PC-9 (cell line): ENCODE measurements at regions of chr1 and their contacts with region 1.

Region 1: DNA sequence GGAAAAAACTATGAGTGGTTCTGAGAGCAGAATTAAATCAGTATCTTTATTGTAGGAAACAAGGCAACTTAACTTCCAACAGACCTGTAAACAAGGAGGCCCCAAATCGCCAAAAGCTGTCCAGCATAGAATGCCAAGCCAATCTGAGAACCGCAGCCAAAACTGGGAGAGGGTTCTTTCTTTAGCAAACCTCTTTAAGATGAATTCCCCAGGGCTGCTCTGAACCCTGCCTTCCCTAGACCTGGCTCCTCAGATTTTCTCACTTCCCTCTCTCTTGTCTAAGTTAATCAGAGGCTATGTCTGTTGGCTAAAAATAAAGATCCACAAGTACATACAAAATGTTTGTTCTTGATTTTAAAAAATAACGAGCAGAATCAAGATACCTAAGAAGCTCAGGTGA is 141.4 kb downstream of the SMYD3 start:
- DNase-seq: no peak
- H3K4me3 ChIP-seq: no peak overlapping the region
- H3K27ac ChIP-seq: no peak overlapping the region
- H3K4me1 ChIP-seq: no peaks in the 10 kb centered on the region
- H3K27me3 ChIP-seq: no peaks in the 10 kb centered on the region
- CTCF ChIP-seq: no peak

Region 2: DNA sequence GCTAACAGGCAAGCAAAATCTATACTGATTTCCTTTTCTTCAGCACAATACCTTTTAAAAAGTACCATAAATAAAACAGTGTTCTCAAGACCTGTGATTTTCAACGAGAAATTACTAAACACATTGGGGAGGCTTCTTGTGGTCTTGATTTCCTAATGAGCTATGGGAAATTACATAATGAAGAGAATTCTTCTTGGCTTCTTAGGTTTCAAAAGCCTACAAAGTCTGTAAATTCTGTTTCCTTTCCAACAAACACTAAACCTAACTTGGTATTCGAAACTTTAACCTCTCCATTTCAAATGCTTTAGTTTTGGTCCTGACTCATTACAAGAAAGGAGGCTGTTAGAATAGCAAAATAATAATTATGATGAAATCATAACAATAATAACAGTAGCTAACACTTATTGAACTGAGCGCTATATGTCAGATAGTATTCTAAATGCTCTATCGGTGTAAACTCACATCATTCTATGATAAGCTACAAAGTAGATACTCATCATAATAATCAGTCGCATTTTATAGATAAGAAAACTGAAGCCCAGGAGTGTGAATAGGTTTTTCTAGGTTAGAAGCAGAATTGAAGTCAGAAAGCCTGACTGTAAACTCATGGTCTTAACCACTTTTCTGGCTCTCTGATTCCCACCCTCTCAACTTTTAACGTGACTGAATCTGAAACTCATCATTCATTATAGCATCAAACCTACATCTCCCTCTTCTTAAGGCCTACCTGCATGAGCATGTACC is 345.3 kb before region 1 on chr1:
- CTCF ChIA-PET with region 1: interaction called, 17 read pairs
- POLR2A ChIA-PET with region 1: no interaction called
- intact Hi-C with region 1: no loop called
- DNase-seq: no peak
- H3K4me3 ChIP-seq: no peak overlapping the region
- H3K27ac ChIP-seq: no peak overlapping the region
- H3K4me1 ChIP-seq: no peaks in the 10 kb centered on the region
- H3K27me3 ChIP-seq: no peaks in the 10 kb centered on the region
- CTCF ChIP-seq: no peak

Region 3: DNA sequence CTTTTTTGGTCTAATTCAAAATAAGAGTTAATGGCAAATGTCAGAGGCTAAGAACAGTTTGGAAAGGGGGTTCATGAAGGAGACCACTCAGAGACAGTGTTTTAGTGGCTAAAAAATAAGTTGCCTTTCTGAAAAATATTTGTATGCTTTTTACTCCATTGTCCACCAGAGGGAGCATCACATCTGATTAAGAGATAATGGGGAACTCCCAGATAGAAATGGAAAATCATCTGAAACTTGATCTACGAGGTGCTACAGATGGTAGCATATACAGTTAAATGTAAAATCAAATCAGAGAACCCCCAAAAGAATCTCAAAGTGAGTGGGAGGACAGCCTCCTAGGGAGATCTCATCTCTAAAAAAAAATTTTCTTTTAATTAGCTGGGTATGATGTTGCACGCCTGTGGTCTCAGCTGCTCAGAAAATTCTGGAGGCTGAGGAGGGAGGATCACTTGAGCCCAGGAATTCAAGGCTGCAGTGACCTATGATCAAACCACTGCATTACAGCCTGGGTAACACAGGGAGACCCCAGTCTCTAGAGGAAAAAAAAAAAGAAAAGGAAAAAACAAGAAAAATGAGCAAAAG is 131.7 kb after region 1 on chr1:
- CTCF ChIA-PET with region 1: no interaction called
- POLR2A ChIA-PET with region 1: no interaction called
- intact Hi-C with region 1: no loop called
- DNase-seq: peak in 1 of 2 experiments; percentile 53
- H3K4me3 ChIP-seq: no peak overlapping the region
- H3K27ac ChIP-seq: no peak overlapping the region
- H3K4me1 ChIP-seq: peaks cover 3% of the 10 kb centered on the region
- H3K27me3 ChIP-seq: no peaks in the 10 kb centered on the region
- CTCF ChIP-seq: peak; percentile 82

Region 4: DNA sequence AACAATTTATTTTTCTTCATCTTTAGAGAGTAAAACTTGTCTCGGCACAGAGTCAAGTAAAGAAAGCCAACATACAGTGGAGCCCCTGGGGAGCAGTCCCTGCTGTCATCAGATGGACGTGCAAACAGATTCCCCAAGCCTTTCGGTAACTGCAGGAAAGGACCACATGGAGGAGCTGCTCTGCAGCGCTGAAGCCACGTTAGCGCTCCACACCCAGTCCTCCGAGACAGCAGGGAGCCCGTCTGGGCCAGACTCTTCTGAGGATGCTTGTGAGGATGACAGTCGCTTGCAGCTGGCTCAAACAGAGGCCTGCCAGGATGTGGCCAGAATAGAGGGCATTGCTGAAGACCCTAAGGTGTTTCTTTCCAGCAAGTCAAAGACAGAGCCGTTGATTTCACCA is 281.4 kb after region 1 on chr1:
- CTCF ChIA-PET with region 1: no interaction called
- POLR2A ChIA-PET with region 1: no interaction called
- intact Hi-C with region 1: no loop called
- DNase-seq: no peak
- H3K4me3 ChIP-seq: no peak overlapping the region
- H3K27ac ChIP-seq: no peak overlapping the region
- H3K4me1 ChIP-seq: no peaks in the 10 kb centered on the region
- H3K27me3 ChIP-seq: no peaks in the 10 kb centered on the region
- CTCF ChIP-seq: no peak